HepG2 (cell line): ENCODE measurements at regions of chr17 and their contacts with region 1.

Region 1: GRCh38 chr17:74736513-74737298 is at the start of gene RAB37:
- DNase-seq: peak; percentile 99
- ATAC-seq: peak; percentile 82
- H3K4me3 ChIP-seq: peak within 1 kb of the TSS; percentile 39 to 78 (median 67)
- H3K27ac ChIP-seq: peak within 1 kb of the TSS; percentile 69
- H3K4me1 ChIP-seq: peaks cover 59% of the 10 kb centered on the region
- H3K27me3 ChIP-seq: peaks cover 8 to 37% of the 10 kb centered on the region in 2 experiments; a peak in 4 of 5 replicates
- CTCF ChIP-seq: peak; percentile 81
- EP300 ChIP-seq: peak; percentile 85 to 87
- POLR2A ChIP-seq: peak; percentile 42 to 71
- RAD21 ChIP-seq: peak; percentile 87
- total RNA-seq, gene RAB37: 0.91 and 1.1 TPM in 2 replicates

Region 2: GRCh38 chr17:74715144-74715543 is 21.6 kb before region 1 on chr17:
- CTCF ChIA-PET with region 1: no interaction called
- POLR2A ChIA-PET with region 1: no interaction called
- in situ Hi-C with region 1: no loop called
- intact Hi-C with region 1: loop called (anchors 1 kb)
- DNase-seq: peak; percentile 66
- ATAC-seq: peak; percentile 74
- H3K4me3 ChIP-seq: no peak overlapping the region
- H3K27ac ChIP-seq: no peak overlapping the region
- H3K4me1 ChIP-seq: peaks cover 26% of the 10 kb centered on the region
- H3K27me3 ChIP-seq: peaks cover 2 to 44% of the 10 kb centered on the region in 2 experiments; a peak in 4 of 5 replicates
- CTCF ChIP-seq: no peak
- EP300 ChIP-seq: no peak; a peak in 1 of 4 replicates
- POLR2A ChIP-seq: no peak
- RAD21 ChIP-seq: no peak

Region 3: GRCh38 chr17:74759243-74759801 is 22.6 kb after region 1 on chr17:
- CTCF ChIA-PET with region 1: no interaction called
- POLR2A ChIA-PET with region 1: interaction called, 221 read pairs
- in situ Hi-C with region 1: no loop called
- intact Hi-C with region 1: no loop called
- DNase-seq: no peak
- ATAC-seq: peak; percentile 4
- H3K4me3 ChIP-seq: peak overlapping the region in 1 of 3 experiments; percentile 19; a peak in 1 of 6 replicates
- H3K27ac ChIP-seq: peak overlapping the region; percentile 64
- H3K4me1 ChIP-seq: peaks cover 99% of the 10 kb centered on the region
- H3K27me3 ChIP-seq: no peaks in the 10 kb centered on the region
- CTCF ChIP-seq: peak; percentile 40
- EP300 ChIP-seq: no peak
- POLR2A ChIP-seq: no peak; a peak in 1 of 4 replicates
- RAD21 ChIP-seq: peak; percentile 59

Region 4: DNA sequence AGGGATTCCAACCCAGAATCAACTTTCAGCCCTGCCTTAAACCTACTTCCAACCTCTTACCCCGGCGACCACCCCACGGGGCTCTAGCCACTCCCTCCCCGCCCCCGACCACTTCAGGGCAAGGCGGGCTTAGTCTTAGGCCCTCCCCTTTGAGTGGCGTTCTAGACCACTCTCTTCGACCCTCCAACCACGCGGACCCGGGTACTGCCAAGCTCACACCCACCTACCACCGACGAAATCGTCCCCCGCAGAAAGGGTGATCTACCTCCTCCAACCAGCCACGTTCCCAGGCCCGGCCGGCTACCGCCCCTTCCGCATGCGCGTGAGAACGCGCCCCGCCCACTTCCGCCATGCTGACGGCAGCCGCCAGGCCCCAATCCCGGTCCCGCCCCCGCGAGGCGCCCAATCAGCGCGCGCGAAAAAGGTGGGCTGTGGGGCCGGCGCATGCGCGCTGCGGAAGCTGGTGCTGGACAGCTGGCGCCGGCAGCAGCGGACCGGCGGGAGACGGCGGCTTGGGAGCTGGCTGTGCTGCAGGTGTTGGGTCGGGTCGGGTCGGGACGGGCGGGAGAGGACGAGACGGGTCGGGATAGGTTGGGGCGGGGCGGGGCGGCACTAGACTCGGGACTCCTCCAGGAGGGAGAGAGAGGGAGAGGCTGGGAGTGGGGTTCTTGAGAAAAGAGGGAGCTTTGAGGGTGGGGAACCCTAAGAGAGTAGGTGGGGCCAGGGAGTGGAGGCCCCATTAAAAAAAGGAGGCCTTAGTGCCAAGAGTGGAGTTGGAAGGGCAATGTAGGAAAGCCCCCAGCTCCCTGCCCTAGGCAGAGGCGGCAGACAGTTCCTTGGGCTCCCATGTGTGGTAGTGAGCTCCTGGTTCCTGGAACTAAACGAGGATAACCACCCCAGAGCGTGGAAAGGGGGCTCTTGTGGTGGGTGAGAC is 39.6 kb after region 1 on chr17 and contains the start of gene NAT9:
- CTCF ChIA-PET with region 1: interaction called, 4 read pairs
- POLR2A ChIA-PET with region 1: interaction called, 162 read pairs
- in situ Hi-C with region 1: no loop called
- intact Hi-C with region 1: no loop called
- DNase-seq: peak; percentile 94
- ATAC-seq: peak; percentile 74
- H3K4me3 ChIP-seq: peak within 1 kb of the TSS; percentile 83 to 95 (median 94)
- H3K27ac ChIP-seq: peak within 1 kb of the TSS; percentile 71
- H3K4me1 ChIP-seq: peaks cover 52% of the 10 kb centered on the region
- H3K27me3 ChIP-seq: no peaks in the 10 kb centered on the region; a peak in 1 of 5 replicates
- CTCF ChIP-seq: 0 out of 2 replicates have a peak, but pooled peaks have one; percentile 6
- EP300 ChIP-seq: 0 out of 4 replicates have a peak, but pooled peaks of 1 of the 2 experiments have one; percentile 43
- POLR2A ChIP-seq: peak; percentile 76 to 92
- RAD21 ChIP-seq: no peak; the same call in 1 of the 2 replicates
- total RNA-seq, gene NAT9: 37.6 and 44.2 TPM in 2 replicates